Aorta (tissue), 5 donors: ENCODE measurements at regions of chr16 and their contacts with region 1.

Region 1: GRCh38 chr16:23556881-23557778 is at the starts of genes EARS2 and UBFD1:
- DNase-seq: peak; percentile 99
- ATAC-seq: peak; percentile 98
- H3K4me3 ChIP-seq: peak within 1 kb of the TSS; percentile 73 to 83
- H3K27ac ChIP-seq: peak within 1 kb of the TSS; percentile 14 to 68
- H3K4me1 ChIP-seq: peaks cover 0 to 2% of the 10 kb centered on the region in 2 donors
- H3K27me3 ChIP-seq: no peaks in the 10 kb centered on the region
- total RNA-seq, gene EARS2: 10.8 to 14.9 TPM
- total RNA-seq, gene UBFD1: 43.8 to 55.4 TPM

Region 2: GRCh38 chr16:23452572-23453337 is 104.4 kb before region 1 on chr16 and contains the start of gene COG7:
- intact Hi-C with region 1: loop called in 1 of 2 experiments (anchors 5 kb)
- DNase-seq: peak; percentile 92 to 97
- ATAC-seq: peak; percentile 98
- H3K4me3 ChIP-seq: peak within 1 kb of the TSS; percentile 64 to 76
- H3K27ac ChIP-seq: peak within 1 kb of the TSS in 1 of 2 donors; percentile 18
- H3K4me1 ChIP-seq: peaks cover 0 to 2% of the 10 kb centered on the region in 2 donors
- H3K27me3 ChIP-seq: no peaks in the 10 kb centered on the region
- total RNA-seq, gene COG7: 15.6 to 30.0 TPM

Region 3: DNA sequence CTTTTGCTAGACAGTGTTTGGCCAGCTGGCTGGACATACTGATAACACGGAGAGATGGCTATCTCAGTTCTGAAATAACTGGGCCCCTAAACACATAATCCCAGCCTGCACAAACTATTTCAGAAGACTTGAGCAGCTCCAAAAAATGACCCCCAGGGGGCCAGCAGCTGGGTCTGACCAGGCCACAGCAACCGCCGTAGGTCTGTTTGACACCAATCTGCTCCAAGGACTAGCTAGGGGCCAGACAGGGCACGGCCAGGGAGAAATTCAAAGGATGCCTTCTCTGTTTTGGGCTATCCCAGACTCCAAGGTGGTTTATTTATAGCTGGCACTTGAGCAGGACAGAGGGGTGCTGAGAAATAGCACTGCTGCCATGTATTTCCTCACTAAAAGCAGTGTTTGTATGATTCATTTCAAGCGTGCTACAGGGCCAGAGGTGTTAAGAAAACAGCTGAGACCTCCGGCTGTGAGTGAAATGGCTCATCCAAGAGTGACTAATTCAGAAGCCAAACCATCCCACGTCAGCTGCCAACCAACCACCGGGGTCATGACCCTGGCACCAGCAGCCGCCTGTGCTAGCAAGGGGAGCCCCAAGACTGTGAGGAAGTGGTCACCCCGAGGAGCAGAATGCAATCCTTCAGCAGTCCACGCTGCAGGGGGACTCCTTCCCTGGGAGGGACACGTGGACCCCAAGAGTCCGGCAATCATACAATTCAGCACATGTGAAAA is 52.5 kb before region 1 on chr16:
- intact Hi-C with region 1: loop called in 1 of 2 experiments (anchors 5 kb)
- DNase-seq: peak; percentile 84 to 90
- ATAC-seq: peak; percentile 63
- H3K4me3 ChIP-seq: no peak overlapping the region
- H3K27ac ChIP-seq: peak overlapping the region in 1 of 2 donors; percentile 56
- H3K4me1 ChIP-seq: peaks cover 0 to 2% of the 10 kb centered on the region in 2 donors
- H3K27me3 ChIP-seq: no peaks in the 10 kb centered on the region

Region 4: DNA sequence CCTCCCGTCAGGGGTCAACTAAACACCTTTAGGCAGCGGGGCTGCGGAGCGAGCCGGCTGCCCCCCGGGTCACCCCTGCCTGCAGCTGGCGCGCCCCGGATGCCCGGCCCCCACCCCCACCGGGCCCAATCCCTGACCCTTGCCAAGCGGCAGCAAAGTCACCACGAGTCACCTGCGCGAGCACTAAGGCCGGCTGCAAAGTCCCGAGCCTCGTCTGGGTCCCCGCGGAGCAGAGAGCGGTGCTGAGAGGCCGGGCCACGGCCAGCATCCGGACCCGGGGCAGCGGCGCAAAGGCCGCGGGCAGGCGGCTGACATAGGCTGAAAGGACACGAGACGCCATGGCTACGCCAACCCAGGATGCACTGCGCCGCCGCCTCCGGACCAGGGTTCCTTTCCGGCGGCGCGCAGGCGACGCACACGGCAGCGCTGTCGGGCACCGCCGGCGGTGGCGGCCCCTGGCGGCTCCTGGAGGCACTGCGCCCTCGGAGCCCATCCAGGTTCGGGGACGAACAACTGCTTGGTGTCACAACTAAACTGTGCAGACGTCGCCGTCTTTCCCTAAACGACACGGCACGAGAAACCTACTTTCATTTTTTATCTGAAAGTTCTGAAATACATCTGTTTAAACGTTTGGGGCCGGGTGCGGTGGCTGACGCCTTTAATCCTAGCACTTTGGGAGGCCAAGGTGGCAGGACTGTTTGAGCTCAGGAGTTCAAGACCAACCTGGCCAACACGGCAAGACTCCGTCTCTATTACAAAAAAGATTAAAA is 39.0 kb after region 1 on chr16 and contains the start of gene NDUFAB1:
- intact Hi-C with region 1: loop called in 1 of 2 experiments (anchors 5 kb)
- DNase-seq: peak; percentile 94 to 97
- ATAC-seq: peak; percentile 99
- H3K4me3 ChIP-seq: peak within 1 kb of the TSS; percentile 82 to 95
- H3K27ac ChIP-seq: peak within 1 kb of the TSS in 1 of 2 donors; percentile 56
- H3K4me1 ChIP-seq: peaks cover 0 to 2% of the 10 kb centered on the region in 2 donors
- H3K27me3 ChIP-seq: no peaks in the 10 kb centered on the region
- total RNA-seq, gene NDUFAB1: 46.1 to 48.7 TPM

Region 5: GRCh38 chr16:23650674-23651416 is 93.7 kb after region 1 on chr16:
- intact Hi-C with region 1: no loop called
- DNase-seq: no peak
- ATAC-seq: no peak
- H3K4me3 ChIP-seq: no peak overlapping the region
- H3K27ac ChIP-seq: no peak overlapping the region
- H3K4me1 ChIP-seq: no peaks in the 10 kb centered on the region
- H3K27me3 ChIP-seq: no peaks in the 10 kb centered on the region